Endothelial cell of umbilical vein (primary cell): ENCODE measurements at regions of chr4 and their contacts with region 1.

Region 1: GRCh38 chr4:65865489-65865888 is 195.2 kb upstream of the EPHA5 start:
- DNase-seq: peak; percentile 55
- H3K4me3 ChIP-seq: no peak overlapping the region
- H3K27ac ChIP-seq: no peak overlapping the region
- H3K4me1 ChIP-seq: no peaks in the 10 kb centered on the region
- H3K27me3 ChIP-seq: no peaks in the 10 kb centered on the region
- CTCF ChIP-seq: peak; percentile 36 to 43
- POLR2A ChIP-seq: no peak

Region 2: GRCh38 chr4:65007841-65008439 is 857.5 kb before region 1 on chr4:
- CTCF ChIA-PET with region 1: interaction called, 7 read pairs
- POLR2A ChIA-PET with region 1: no interaction called
- dilution Hi-C with region 1: no loop called
- intact Hi-C with region 1: loop called (anchors 5 kb)
- DNase-seq: peak; percentile 50
- H3K4me3 ChIP-seq: no peak overlapping the region
- H3K27ac ChIP-seq: no peak overlapping the region
- H3K4me1 ChIP-seq: no peaks in the 10 kb centered on the region
- H3K27me3 ChIP-seq: no peaks in the 10 kb centered on the region
- CTCF ChIP-seq: peak; percentile 39 to 40
- POLR2A ChIP-seq: no peak

Region 3: GRCh38 chr4:65089666-65090065 is 775.8 kb before region 1 on chr4:
- CTCF ChIA-PET with region 1: interaction called, 10 read pairs
- POLR2A ChIA-PET with region 1: no interaction called
- dilution Hi-C with region 1: no loop called
- intact Hi-C with region 1: loop called (anchors 10 kb)
- DNase-seq: peak; percentile 2
- H3K4me3 ChIP-seq: no peak overlapping the region
- H3K27ac ChIP-seq: no peak overlapping the region
- H3K4me1 ChIP-seq: no peaks in the 10 kb centered on the region
- H3K27me3 ChIP-seq: no peaks in the 10 kb centered on the region
- CTCF ChIP-seq: no peak
- POLR2A ChIP-seq: no peak

Region 4: GRCh38 chr4:65416891-65417290 is 448.6 kb before region 1 on chr4:
- CTCF ChIA-PET with region 1: interaction called, 4 read pairs
- POLR2A ChIA-PET with region 1: no interaction called
- dilution Hi-C with region 1: no loop called
- intact Hi-C with region 1: loop called (anchors 5 kb)
- DNase-seq: peak; percentile 80
- H3K4me3 ChIP-seq: no peak overlapping the region
- H3K27ac ChIP-seq: no peak overlapping the region
- H3K4me1 ChIP-seq: no peaks in the 10 kb centered on the region
- H3K27me3 ChIP-seq: no peaks in the 10 kb centered on the region
- CTCF ChIP-seq: no peak
- POLR2A ChIP-seq: no peak

Region 5: GRCh38 chr4:65850523-65850922 is 15.0 kb before region 1 on chr4:
- CTCF ChIA-PET with region 1: interaction called, 10 read pairs
- POLR2A ChIA-PET with region 1: no interaction called
- dilution Hi-C with region 1: no loop called
- intact Hi-C with region 1: no loop called
- DNase-seq: no peak
- H3K4me3 ChIP-seq: no peak overlapping the region
- H3K27ac ChIP-seq: no peak overlapping the region
- H3K4me1 ChIP-seq: no peaks in the 10 kb centered on the region
- H3K27me3 ChIP-seq: no peaks in the 10 kb centered on the region
- CTCF ChIP-seq: no peak
- POLR2A ChIP-seq: no peak